Spleen (tissue), 13 donors: ENCODE measurements at regions of chr2 and their contacts with region 1.

Region 1: DNA sequence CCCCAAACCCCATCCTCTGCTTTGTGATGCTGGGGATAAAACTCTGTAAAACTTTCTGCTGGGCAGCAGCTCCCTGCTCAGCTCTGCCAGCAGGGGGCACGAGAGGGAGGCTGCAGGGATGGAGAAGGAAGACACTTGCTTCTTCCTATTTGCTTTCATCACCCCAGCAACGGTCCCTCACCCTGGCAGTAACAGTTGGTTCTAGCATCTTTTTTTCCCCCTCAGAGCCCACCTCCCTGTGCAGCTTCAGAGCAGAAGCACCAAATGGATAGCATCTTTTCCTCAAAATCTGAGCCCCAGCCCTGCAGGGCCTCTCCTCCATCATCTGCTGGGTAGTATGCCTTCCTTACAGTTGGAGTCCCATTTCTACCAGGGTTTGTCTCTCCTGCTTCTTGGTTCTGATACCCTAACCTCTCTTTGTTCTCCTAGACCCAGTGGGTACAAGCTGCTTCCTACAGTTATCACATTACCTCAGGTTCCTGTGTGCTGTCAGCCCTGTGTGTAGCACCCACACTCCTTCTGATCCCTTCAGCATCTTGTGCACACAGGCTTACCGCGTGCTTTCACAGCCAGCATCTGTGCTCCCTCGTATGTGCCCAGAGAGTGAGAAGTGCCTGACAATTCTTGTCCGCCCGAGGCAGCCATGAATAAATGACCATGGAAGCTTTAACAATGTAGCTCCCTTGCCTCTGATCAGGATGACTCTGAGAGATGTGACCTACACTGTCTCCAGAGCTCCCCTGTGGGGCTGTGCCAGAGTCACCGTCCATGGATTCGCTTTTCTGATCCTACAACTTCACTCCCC is 14.5 kb downstream of the CKAP2L start:
- DNase-seq: peak; percentile 95
- H3K4me3 ChIP-seq: peak overlapping the region in 1 of 8 donors; percentile 14
- H3K27ac ChIP-seq: peak overlapping the region in 3 of 8 donors; percentile 3 to 41 (median 33)
- H3K4me1 ChIP-seq: peaks cover 0 to 17% (median 1%) of the 10 kb centered on the region in 6 donors
- H3K27me3 ChIP-seq: no peaks in the 10 kb centered on the region
- CTCF ChIP-seq: peak; percentile 67 to 95 (median 90)
- POLR2A ChIP-seq: no peak

Region 2: GRCh38 chr2:112884869-112885505 is 135.0 kb after region 1 on chr2:
- intact Hi-C with region 1: loop called (anchors 5 kb)
- DNase-seq: peak; percentile 87
- H3K4me3 ChIP-seq: no peak overlapping the region
- H3K27ac ChIP-seq: no peak overlapping the region
- H3K4me1 ChIP-seq: peaks cover 0 to 41% (median 14%) of the 10 kb centered on the region in 6 donors
- H3K27me3 ChIP-seq: no peaks in the 10 kb centered on the region
- CTCF ChIP-seq: peak; percentile 60 to 90 (median 82)
- POLR2A ChIP-seq: no peak

Region 3: DNA sequence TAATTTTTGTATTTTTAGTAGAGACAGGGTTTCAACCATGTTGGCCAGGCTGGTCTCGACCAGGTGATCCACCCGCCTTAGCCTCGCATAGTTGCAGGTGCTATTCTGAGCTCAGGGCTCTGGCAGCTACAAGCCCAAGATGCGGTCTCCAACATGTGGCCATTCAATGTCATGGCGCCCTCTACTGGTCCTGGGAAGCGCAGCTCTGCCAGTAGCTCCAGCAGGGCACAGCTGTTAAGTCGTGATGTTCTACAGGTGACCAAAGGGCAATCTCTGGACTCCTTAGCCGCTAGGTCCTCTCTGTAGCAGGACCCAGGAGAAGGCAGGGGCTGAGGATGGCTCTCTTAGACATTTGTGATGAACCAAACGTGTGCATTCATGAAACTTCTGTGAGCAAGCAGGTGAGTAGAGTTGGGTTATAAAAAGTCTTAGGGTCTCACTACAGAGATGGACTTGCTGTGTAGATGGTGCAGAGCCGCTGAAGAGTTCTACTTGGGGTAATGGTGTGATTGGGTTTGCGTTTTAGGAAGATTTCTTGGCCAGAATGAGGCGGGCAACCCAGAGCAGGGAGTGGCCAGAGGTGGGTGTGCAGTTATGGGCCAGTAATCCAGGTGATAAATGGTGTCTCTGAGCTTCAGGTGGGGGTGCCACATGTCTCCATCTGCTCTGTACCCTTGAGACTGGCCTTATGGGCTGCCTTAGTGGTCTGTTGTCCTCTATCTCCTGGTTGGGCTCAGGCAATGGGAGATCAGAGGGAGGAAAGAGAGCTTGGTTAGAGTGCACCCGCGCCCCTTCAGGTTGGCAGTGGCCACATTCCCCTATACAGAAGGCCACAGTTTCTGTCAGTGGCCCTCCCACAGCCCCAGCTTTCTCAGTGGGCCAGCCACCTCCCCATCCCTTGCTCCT is 192.0 kb after region 1 on chr2:
- intact Hi-C with region 1: loop called (anchors 5 kb)
- DNase-seq: peak; percentile 86
- H3K4me3 ChIP-seq: no peak overlapping the region
- H3K27ac ChIP-seq: no peak overlapping the region
- H3K4me1 ChIP-seq: no peaks in the 10 kb centered on the region
- H3K27me3 ChIP-seq: no peaks in the 10 kb centered on the region
- CTCF ChIP-seq: peak; percentile 26 to 85 (median 68)
- POLR2A ChIP-seq: no peak

Region 4: GRCh38 chr2:112958428-112959108 is 208.6 kb after region 1 on chr2:
- intact Hi-C with region 1: loop called (anchors 5 kb)
- DNase-seq: no peak
- H3K4me3 ChIP-seq: no peak overlapping the region
- H3K27ac ChIP-seq: no peak overlapping the region
- H3K4me1 ChIP-seq: no peaks in the 10 kb centered on the region
- H3K27me3 ChIP-seq: peaks cover 0 to 10% (median 0%) of the 10 kb centered on the region in 7 donors
- CTCF ChIP-seq: peak in 10 of 11 experiments; percentile 20 to 83 (median 72)
- POLR2A ChIP-seq: no peak

Region 5: GRCh38 chr2:113370478-113371091 is 620.6 kb after region 1 on chr2:
- intact Hi-C with region 1: no loop called
- DNase-seq: no peak
- H3K4me3 ChIP-seq: no peak overlapping the region
- H3K27ac ChIP-seq: no peak overlapping the region
- H3K4me1 ChIP-seq: peaks cover 0 to 11% (median 4%) of the 10 kb centered on the region in 6 donors
- H3K27me3 ChIP-seq: no peaks in the 10 kb centered on the region
- CTCF ChIP-seq: peak; percentile 33 to 82 (median 64)
- POLR2A ChIP-seq: no peak